ENCODE measurements at regions of chr17 and their contacts with region 1.

Region 1: GRCh38 chr17:37047631-37048104 is 98.9 kb downstream of the AATF start:
- DNase-seq: peak; percentile 78
- H3K4me3 ChIP-seq: no peak overlapping the region
- H3K27ac ChIP-seq: no peak overlapping the region
- H3K4me1 ChIP-seq: no peaks in the 10 kb centered on the region
- H3K27me3 ChIP-seq: no peaks in the 10 kb centered on the region
- CTCF ChIP-seq: peak; percentile 77

Region 2: GRCh38 chr17:36629252-36629847 is 418.3 kb before region 1 on chr17:
- CTCF ChIA-PET with region 1: interaction called, 4 read pairs
- POLR2A ChIA-PET with region 1: no interaction called
- intact Hi-C with region 1: loop called (anchors 1 kb)
- DNase-seq: peak; percentile 48
- H3K4me3 ChIP-seq: no peak overlapping the region
- H3K27ac ChIP-seq: no peak overlapping the region
- H3K4me1 ChIP-seq: no peaks in the 10 kb centered on the region
- H3K27me3 ChIP-seq: no peaks in the 10 kb centered on the region
- CTCF ChIP-seq: peak; percentile 77

Region 3: DNA sequence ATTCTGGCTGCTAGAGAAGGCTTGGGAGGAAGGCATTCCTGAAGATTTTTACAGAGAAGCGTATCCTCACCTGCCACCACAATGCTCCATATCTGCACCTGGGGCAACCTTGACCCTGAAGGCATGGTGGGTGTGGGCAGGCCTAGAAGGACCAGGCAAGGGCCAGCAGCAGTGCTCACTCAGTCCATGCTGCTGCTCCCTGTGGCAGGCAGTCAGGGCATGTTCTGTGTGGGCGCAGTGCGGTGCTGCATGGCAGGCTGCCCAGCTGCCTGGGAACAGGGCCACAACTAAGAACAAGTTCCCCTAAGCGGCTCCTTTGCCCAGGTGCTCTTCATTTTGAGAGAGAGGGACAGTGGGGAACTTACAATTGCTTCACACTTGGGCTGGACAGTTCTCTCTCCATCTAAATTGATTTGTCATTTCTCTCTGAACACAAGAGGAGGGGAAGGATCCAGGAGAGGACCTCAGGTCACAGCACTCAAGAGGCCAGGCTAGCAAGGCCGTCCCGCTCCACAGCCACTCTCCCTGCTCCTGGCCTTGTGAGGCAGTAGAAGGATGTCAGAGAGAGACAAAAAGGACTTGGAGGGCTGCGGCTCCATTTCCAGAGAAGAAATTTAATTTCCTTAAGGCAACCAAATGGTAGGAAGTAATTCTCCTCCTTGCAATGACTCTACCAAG is 59.9 kb after region 1 on chr17:
- CTCF ChIA-PET with region 1: no interaction called
- POLR2A ChIA-PET with region 1: no interaction called
- intact Hi-C with region 1: no loop called
- DNase-seq: no peak
- H3K4me3 ChIP-seq: no peak overlapping the region
- H3K27ac ChIP-seq: no peak overlapping the region
- H3K4me1 ChIP-seq: no peaks in the 10 kb centered on the region
- H3K27me3 ChIP-seq: no peaks in the 10 kb centered on the region
- CTCF ChIP-seq: no peak

Measured in A673 (cell line).